Esophagus muscularis mucosa (tissue), 4 donors: ENCODE measurements at regions of chr2 and their contacts with region 1.

Region 1: GRCh38 chr2:191013932-191014652 is at the start of gene STAT1:
- DNase-seq: peak; percentile 98
- H3K4me3 ChIP-seq: peak within 1 kb of the TSS; percentile 77 to 89 (median 84)
- H3K27ac ChIP-seq: peak within 1 kb of the TSS; percentile 84 to 96 (median 91)
- H3K4me1 ChIP-seq: peaks cover 22 to 35% (median 34%) of the 10 kb centered on the region in 4 donors
- H3K27me3 ChIP-seq: no peaks in the 10 kb centered on the region
- CTCF ChIP-seq: peak in 2 of 3 experiments; percentile 16 to 22
- EP300 ChIP-seq: peak; percentile 49
- POLR2A ChIP-seq: peak; percentile 78
- total RNA-seq, gene STAT1: 44.2 to 57.3 (median 48.6) TPM

Region 2: GRCh38 chr2:190843874-190844699 is 170.0 kb before region 1 on chr2:
- intact Hi-C with region 1: loop called (anchors 10 kb)
- DNase-seq: no peak
- H3K4me3 ChIP-seq: no peak overlapping the region
- H3K27ac ChIP-seq: no peak overlapping the region
- H3K4me1 ChIP-seq: peaks cover 6 to 26% (median 19%) of the 10 kb centered on the region in 4 donors
- H3K27me3 ChIP-seq: no peaks in the 10 kb centered on the region
- CTCF ChIP-seq: no peak
- EP300 ChIP-seq: no peak
- POLR2A ChIP-seq: no peak

Region 3: DNA sequence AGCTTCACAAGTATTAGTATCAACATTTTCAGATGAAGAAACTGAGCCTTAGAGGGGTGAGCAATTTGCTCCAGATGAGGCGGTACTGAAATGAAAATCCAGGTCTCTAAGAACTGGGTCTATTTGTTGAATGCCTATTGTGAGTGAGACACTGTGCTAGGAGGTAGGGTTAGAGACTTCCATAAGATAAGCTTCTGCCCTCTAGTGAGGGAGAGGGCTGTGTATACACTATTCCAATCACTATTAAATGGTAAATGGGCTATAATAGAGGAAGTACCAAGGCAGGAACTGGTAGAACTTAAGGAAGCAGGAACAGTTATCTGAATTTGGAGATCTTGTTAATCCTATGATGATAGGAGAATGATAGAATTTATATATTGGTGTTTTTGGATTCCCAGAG is 157.1 kb before region 1 on chr2:
- intact Hi-C with region 1: no loop called
- DNase-seq: no peak
- H3K4me3 ChIP-seq: no peak overlapping the region
- H3K27ac ChIP-seq: no peak overlapping the region
- H3K4me1 ChIP-seq: peaks cover 8 to 46% (median 42%) of the 10 kb centered on the region in 4 donors
- H3K27me3 ChIP-seq: no peaks in the 10 kb centered on the region
- CTCF ChIP-seq: no peak
- EP300 ChIP-seq: no peak
- POLR2A ChIP-seq: no peak

Region 4: DNA sequence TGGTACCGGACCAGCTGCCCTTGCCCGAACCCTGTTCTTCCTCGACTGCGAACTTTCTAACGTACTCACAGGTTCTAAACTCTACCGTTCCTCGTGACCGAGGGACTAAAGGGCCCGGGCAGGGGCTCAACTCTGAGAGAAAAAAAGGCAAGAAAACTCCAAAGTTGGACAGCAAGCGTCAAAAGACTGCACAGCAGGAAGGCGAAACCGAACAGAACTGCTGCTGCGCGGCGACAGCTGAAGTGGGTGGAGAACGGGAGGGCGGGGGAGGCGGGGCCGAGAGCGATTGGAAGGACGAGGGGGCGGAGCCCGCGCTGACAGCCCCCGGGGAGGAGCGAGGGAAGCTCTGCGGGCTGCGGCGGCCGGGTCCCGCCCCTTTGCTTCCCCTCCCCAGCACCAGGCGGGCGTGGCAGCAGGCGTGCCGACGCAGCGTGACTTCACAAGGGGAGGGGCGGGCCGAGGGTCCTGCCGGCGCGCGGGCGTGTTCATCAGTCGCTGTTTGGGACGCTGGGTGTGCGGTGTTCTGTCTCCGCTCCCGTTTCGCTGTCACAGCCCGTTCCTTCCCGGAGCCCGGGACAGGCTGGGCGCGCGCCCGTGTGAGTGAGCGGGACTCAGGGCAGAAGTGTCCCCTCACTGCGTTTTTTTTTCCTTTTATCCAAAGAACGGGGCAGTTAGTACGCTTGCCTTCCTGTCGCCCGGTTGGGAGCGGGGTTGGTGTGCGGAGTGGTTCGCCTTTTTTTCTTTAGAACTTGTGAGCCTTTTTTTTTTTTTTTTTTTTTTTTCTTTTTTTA is 663.7 kb after region 1 on chr2 and contains the start of gene NABP1:
- intact Hi-C with region 1: loop called (anchors 5 kb)
- DNase-seq: peak; percentile 99
- H3K4me3 ChIP-seq: peak within 1 kb of the TSS; percentile 64 to 81 (median 74)
- H3K27ac ChIP-seq: peak within 1 kb of the TSS; percentile 91 to 96 (median 94)
- H3K4me1 ChIP-seq: peaks cover 0 to 44% (median 25%) of the 10 kb centered on the region in 4 donors
- H3K27me3 ChIP-seq: no peaks in the 10 kb centered on the region
- CTCF ChIP-seq: no peak
- EP300 ChIP-seq: no peak
- POLR2A ChIP-seq: peak; percentile 98
- total RNA-seq, gene NABP1: 4.2 to 27.8 (median 8.0) TPM